HepG2 (cell line): ENCODE measurements at regions of chrX and their contacts with region 1.

Region 1: DNA sequence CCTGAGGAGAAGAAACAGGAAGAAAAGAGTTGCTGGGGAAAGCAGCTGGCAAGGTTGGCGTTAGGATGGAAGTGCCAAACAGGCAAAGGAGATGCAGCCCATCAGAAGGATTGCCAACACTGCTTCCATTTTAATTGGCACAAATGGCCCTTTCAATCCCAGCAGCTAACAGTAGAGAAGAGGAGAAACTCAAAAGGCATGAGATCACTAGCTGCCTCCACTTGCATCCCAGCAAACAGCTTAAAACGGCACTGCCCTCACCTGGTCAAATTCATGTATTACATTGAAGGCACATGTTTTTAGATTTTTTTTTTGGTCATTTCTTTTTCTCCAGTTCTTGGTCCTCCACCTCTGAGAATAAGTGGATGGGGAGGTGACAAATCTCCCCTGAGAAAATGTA is 14.9 kb upstream of the LOC101059915 start:
- DNase-seq: peak; percentile 31
- ATAC-seq: peak; percentile 58; the same call in 2 of the 3 replicates
- H3K4me3 ChIP-seq: no peak overlapping the region
- H3K27ac ChIP-seq: no peak overlapping the region
- H3K4me1 ChIP-seq: no peaks in the 10 kb centered on the region
- H3K27me3 ChIP-seq: 0 out of 5 replicates have a peak, but pooled peaks cover 0 to 3% of the 10 kb centered on the region in 2 experiments
- CTCF ChIP-seq: peak; percentile 71
- EP300 ChIP-seq: no peak
- POLR2A ChIP-seq: no peak
- RAD21 ChIP-seq: no peak

Region 2: GRCh38 chrX:71068049-71068763 is 584.2 kb before region 1 on chrX and contains the start of gene SNX12:
- CTCF ChIA-PET with region 1: no interaction called
- POLR2A ChIA-PET with region 1: no interaction called
- in situ Hi-C with region 1: no loop called
- intact Hi-C with region 1: no loop called
- DNase-seq: peak; percentile 88
- ATAC-seq: peak; percentile 99
- H3K4me3 ChIP-seq: peak within 1 kb of the TSS; percentile 68 to 74 (median 72)
- H3K27ac ChIP-seq: peak within 1 kb of the TSS; percentile 57
- H3K4me1 ChIP-seq: peaks cover 16% of the 10 kb centered on the region
- H3K27me3 ChIP-seq: no peaks in the 10 kb centered on the region; a peak in 1 of 5 replicates
- CTCF ChIP-seq: no peak
- EP300 ChIP-seq: peak in 1 of 2 experiments; percentile 49; a peak in 1 of 4 replicates
- POLR2A ChIP-seq: peak in 1 of 2 experiments; percentile 79; a peak in 2 of 4 replicates
- RAD21 ChIP-seq: peak; percentile 68
- total RNA-seq, gene SNX12: 42.2 and 51.5 TPM in 2 replicates

Region 3: DNA sequence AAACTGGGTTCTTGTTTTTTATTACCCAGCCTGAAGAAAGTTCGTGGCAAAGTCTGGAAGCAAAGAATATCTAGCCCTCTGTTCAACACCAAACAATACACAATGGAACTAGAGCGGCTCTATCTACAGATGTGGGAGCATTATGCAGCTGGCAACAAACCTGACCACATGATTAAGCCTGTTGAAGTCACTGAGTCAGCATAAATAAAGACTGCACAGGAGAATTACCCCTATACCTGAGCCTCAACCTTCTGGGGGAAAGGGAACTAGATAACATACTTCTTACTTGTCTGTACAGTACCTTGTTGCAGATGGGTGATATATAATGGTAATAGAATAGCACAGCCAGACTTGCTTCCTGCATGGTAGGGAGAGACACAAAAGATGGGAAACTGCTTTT is 78.8 kb before region 1 on chrX:
- CTCF ChIA-PET with region 1: no interaction called
- POLR2A ChIA-PET with region 1: no interaction called
- in situ Hi-C with region 1: no loop called
- intact Hi-C with region 1: loop called (anchors 5 kb)
- DNase-seq: no peak
- ATAC-seq: no peak
- H3K4me3 ChIP-seq: no peak overlapping the region
- H3K27ac ChIP-seq: no peak overlapping the region
- H3K4me1 ChIP-seq: no peaks in the 10 kb centered on the region
- H3K27me3 ChIP-seq: no peaks in the 10 kb centered on the region
- CTCF ChIP-seq: no peak
- EP300 ChIP-seq: no peak
- POLR2A ChIP-seq: no peak
- RAD21 ChIP-seq: no peak

Region 4: GRCh38 chrX:71586929-71587328 is 65.5 kb before region 1 on chrX:
- CTCF ChIA-PET with region 1: no interaction called
- POLR2A ChIA-PET with region 1: no interaction called
- in situ Hi-C with region 1: no loop called
- intact Hi-C with region 1: no loop called
- DNase-seq: peak; percentile 69
- ATAC-seq: peak; percentile 98
- H3K4me3 ChIP-seq: no peak overlapping the region
- H3K27ac ChIP-seq: no peak overlapping the region
- H3K4me1 ChIP-seq: peaks cover 12% of the 10 kb centered on the region
- H3K27me3 ChIP-seq: no peaks in the 10 kb centered on the region
- CTCF ChIP-seq: no peak
- EP300 ChIP-seq: no peak
- POLR2A ChIP-seq: no peak
- RAD21 ChIP-seq: no peak

Region 5: DNA sequence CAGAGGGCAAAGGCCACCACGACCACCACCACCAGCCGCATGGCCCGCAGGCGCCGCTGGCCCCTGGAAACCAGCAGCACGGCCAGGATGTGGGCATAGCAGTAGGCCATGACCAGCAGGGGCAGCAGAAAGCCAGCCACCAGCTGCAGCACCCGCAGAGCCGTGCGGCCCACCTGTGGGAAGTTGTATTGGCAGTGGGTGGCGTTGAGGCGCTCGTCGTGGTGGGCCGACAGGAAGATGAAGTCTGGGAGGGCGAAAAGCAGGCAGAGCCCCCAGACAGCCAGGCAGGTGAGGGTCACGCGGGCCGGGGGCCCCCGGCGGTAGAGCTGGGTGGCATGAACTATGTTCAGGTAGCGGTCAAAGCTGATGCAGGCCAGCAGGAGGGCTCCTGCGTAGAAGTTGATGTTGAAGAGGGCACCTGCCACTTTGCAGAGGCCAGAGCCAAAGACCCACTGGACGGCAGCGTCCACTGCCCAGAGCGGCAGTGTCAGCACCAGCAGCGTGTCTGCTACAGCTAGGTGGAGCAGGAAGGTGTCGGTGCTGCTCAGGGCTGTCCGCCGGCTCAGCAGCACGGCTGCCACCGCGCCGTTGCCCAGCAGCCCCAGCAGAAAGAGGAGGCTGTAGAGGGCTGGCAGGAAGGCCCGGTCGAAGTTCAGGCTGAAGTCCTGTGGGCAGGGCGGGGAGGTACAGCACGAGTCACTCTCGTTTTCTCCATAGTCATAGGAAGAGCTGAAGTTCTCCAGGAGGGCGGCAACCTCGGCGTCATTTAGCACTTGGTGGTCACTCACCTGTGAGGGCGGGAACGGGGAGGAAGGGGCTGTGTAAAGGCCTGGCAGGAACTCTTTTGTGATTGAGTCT is 35.5 kb before region 1 on chrX:
- CTCF ChIA-PET with region 1: interaction called, 6 read pairs
- POLR2A ChIA-PET with region 1: no interaction called
- in situ Hi-C with region 1: no loop called
- intact Hi-C with region 1: loop called (anchors 2 kb)
- DNase-seq: peak; percentile 31
- ATAC-seq: peak; percentile 92
- H3K4me3 ChIP-seq: peak overlapping the region; percentile 38 to 66 (median 45); a peak in 5 of 6 replicates
- H3K27ac ChIP-seq: no peak overlapping the region
- H3K4me1 ChIP-seq: peaks cover 9% of the 10 kb centered on the region
- H3K27me3 ChIP-seq: no peaks in the 10 kb centered on the region
- CTCF ChIP-seq: peak; percentile 49
- EP300 ChIP-seq: no peak
- POLR2A ChIP-seq: no peak
- RAD21 ChIP-seq: peak; percentile 22; the same call in 1 of the 2 replicates